Activated CD4-positive, alpha-beta memory T cell treated with anti-CD3 and anti-CD28 coated beads, Interleukin-2, amount 10 ng/mL, durations not matched to agents 7 days and 5 days (primary cell): ENCODE measurements at regions of chr2 and their contacts with region 1.

Region 1: DNA sequence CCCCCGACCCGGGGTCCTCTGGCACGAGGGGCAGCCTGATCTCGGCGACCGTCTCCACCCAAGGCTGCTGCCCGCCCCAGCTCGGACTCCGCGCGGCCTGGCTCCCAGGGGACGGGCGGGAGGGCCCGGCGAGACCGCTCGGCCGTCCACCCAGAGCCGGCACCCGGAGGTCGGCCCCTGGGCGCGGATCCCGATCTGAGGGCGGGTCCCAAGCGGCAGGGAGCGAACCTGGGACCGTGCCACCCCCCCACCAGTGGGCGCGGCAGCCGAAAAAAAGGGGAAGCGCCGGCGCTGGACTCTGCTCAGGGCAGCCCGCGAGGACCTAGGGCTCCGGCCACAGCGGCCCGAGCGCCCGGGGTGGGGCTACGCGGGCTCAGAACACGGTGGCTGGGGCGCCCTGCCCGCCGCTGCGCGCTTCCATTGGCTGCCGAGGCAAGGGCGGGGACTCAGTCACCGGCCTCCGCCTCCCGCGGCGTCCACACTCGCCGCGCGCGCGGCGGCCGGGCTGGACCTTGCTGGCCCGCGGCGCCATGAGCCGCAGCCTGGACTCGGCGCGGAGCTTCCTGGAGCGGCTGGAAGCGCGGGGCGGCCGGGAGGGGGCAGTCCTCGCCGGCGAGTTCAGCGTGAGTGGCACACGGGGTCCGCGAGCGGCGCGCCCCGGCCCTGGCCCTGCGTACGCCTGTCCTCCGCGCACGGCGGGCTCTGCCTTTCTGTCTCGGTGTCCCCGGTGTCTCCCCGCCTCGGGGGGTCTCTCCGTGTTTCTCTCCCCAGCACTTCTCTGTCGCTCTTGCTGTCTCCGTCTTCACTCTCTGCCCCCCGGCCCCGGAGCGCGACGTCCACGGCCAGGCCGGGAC is at the start of gene PTPN18:
- DNase-seq: peak; percentile 73
- H3K4me3 Mint-ChIP-seq: peak within 1 kb of the TSS; percentile 72
- H3K27ac Mint-ChIP-seq: no peak within 1 kb of the TSS
- H3K4me1 Mint-ChIP-seq: peaks cover 14% of the 10 kb centered on the region
- H3K27me3 Mint-ChIP-seq: peaks cover 1% of the 10 kb centered on the region
- total RNA-seq, gene PTPN18: 98.0 to 98.6 TPM

Region 2: DNA sequence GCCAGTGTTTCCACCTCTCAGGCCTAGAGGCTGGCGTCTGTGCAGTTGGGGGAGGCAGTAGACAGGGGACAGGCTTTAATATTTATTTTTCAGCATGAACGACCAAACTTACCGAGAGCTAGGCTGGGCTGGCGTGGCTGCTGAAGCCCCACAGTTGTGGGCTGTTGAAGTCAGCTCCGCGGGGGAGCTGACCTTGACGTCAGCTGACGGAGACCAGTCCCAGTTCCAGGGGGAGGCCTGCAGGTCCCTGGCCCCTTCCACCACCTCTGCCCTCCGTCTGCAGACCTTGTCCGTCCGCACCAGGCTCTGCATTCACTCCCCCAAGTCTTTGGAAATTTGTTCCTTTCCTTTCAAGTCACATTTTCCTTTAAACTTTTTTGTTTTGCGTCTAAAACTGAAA is 124.1 kb before region 1 on chr2:
- CTCF ChIA-PET with region 1: no interaction called
- POLR2A ChIA-PET with region 1: no interaction called
- DNase-seq: no peak
- H3K4me3 Mint-ChIP-seq: no peak overlapping the region
- H3K27ac Mint-ChIP-seq: no peak overlapping the region
- H3K4me1 Mint-ChIP-seq: no peaks in the 10 kb centered on the region
- H3K27me3 Mint-ChIP-seq: peaks cover 8% of the 10 kb centered on the region

Region 3: DNA sequence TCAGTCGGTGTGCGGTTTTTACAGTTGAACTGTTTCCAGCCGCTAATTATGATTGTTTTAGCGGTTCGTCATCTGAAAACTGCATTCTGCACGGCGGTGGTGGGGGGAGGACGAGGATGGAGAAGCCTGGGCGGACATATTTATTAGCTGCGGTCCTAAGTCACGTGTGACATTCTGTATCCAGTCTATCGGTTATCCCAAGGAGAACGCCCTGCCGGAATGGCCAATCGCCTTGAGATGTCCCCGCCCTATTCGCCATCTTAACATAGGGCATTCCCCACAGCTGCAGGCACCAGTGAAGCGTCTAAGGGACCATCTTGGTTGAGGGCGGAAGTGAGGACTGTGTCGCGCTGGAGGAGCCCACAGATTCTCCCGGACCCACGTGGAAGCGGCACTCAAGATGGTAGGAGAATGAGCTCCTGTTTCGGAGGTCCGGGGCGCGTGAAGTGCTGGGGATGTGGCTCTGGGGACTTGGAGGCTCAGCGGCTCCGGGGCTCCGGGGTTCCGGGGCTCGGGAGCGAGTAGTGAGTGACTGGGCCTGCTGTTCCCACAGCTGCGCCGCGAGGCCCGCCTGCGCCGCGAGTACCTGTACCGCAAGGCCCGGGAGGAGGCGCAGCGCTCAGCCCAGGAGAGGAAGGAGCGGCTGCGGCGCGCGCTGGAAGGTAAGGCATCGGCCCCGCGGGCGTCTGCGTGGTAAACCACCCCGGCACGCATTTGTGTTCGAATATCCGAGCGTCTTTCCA is 13.1 kb before region 1 on chr2 and contains the start of gene IMP4:
- CTCF ChIA-PET with region 1: interaction called, 5 read pairs
- POLR2A ChIA-PET with region 1: interaction called, 52 read pairs
- DNase-seq: peak; percentile 97
- H3K4me3 Mint-ChIP-seq: peak within 1 kb of the TSS; percentile 99
- H3K27ac Mint-ChIP-seq: peak within 1 kb of the TSS; percentile 96
- H3K4me1 Mint-ChIP-seq: peaks cover 42% of the 10 kb centered on the region
- H3K27me3 Mint-ChIP-seq: no peaks in the 10 kb centered on the region
- total RNA-seq, gene IMP4: 57.7 to 58.9 TPM

Region 4: GRCh38 chr2:130385709-130386108 is 29.9 kb after region 1 on chr2:
- CTCF ChIA-PET with region 1: no interaction called
- POLR2A ChIA-PET with region 1: no interaction called
- DNase-seq: no peak
- H3K4me3 Mint-ChIP-seq: no peak overlapping the region
- H3K27ac Mint-ChIP-seq: no peak overlapping the region
- H3K4me1 Mint-ChIP-seq: peaks cover 21% of the 10 kb centered on the region
- H3K27me3 Mint-ChIP-seq: no peaks in the 10 kb centered on the region